AG04450 (cell line): ENCODE measurements at regions of chr1 and their contacts with region 1.

Region 1: DNA sequence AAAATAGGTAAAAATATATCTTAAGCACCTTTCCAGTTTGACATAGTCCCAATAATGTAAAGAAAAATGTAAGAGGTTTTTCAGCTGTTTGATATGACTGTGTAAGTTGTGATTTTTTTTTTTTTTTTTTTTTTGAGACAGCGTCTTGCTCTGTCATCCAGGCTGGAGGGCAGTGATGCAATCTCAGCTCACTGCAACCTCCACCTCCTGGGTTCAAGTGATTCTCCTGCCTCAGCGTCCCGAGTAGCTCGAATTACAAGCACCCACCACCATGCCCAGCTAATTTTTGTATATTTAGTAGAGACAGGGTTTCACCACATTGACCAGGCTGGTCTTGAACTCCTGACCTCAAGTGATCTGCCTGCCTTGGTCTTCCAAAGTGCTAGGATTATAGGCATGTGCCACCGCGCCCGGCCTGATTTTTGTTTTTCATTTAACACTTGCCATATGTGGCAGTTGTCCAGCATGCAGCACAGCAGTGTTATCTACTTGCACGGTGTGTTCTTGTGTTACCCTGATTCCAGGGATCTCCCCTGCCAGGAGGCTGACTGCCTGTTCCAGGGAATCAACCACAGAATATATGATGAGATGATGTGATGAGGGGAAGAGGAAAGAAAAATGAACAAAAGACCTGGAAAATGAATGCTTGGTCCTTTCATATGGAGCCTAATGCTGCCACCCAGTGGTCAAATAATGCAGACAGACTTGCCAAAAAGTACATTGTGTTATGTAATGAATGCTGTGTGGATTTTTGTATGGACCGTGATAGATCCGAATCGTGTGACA is 79.0 kb downstream of the RAVER2 start:
- DNase-seq: peak; percentile 55
- H3K4me3 ChIP-seq: no peak overlapping the region
- H3K27ac ChIP-seq: no peak overlapping the region
- H3K27me3 ChIP-seq: no peaks in the 10 kb centered on the region
- CTCF ChIP-seq: peak; percentile 79

Region 2: GRCh38 chr1:64268653-64269557 is 555.0 kb before region 1 on chr1:
- CTCF ChIA-PET with region 1: interaction called, 80 read pairs
- POLR2A ChIA-PET with region 1: no interaction called
- DNase-seq: peak; percentile 65
- H3K4me3 ChIP-seq: no peak overlapping the region
- H3K27ac ChIP-seq: no peak overlapping the region
- H3K27me3 ChIP-seq: peaks cover 6% of the 10 kb centered on the region
- CTCF ChIP-seq: peak; percentile 80

Region 3: DNA sequence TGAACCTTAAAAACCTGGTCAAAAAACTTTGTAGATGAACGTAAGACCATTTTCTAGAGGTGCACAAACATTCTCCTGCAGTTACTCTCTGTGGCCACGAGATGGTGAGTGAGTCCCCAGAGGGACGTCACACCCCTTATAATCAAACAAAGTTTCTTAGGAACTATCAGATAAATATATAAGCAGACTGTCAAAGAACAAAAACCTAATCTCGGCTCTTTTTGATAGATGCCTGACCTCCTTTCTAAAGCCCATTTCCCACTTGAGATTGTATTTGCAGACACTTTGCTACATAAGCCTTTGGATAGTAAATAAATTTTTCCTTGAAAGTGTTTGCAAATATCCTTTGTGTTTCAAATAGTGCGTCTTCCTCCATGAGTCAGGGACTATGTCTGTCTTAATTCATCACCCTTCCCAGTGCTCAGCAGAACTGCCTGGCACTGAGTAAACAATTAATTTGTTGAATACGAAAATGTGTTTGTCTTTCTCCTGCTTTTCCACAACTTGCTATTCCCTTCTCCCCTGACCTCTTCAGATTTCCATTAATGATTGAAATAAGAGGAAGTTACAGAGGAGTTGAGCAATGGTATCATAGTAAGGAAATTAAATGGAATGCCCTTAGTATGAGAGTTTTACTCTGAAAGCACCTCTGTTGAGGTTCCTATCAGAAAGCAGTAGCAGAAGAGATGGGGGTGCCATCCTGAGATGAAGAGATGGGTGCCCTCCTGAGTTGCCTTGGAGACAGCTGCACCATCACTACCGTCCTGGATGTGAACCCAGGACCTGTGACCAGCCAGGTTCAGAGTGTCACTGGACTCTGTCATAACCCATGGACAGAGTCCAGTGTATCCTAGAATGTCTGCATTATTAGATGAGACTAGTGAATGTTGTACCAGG is 136.8 kb before region 1 on chr1:
- CTCF ChIA-PET with region 1: interaction called, 16 read pairs
- POLR2A ChIA-PET with region 1: no interaction called
- DNase-seq: peak; percentile 16
- H3K4me3 ChIP-seq: no peak overlapping the region
- H3K27ac ChIP-seq: no peak overlapping the region
- H3K27me3 ChIP-seq: no peaks in the 10 kb centered on the region
- CTCF ChIP-seq: peak; percentile 94

Region 4: DNA sequence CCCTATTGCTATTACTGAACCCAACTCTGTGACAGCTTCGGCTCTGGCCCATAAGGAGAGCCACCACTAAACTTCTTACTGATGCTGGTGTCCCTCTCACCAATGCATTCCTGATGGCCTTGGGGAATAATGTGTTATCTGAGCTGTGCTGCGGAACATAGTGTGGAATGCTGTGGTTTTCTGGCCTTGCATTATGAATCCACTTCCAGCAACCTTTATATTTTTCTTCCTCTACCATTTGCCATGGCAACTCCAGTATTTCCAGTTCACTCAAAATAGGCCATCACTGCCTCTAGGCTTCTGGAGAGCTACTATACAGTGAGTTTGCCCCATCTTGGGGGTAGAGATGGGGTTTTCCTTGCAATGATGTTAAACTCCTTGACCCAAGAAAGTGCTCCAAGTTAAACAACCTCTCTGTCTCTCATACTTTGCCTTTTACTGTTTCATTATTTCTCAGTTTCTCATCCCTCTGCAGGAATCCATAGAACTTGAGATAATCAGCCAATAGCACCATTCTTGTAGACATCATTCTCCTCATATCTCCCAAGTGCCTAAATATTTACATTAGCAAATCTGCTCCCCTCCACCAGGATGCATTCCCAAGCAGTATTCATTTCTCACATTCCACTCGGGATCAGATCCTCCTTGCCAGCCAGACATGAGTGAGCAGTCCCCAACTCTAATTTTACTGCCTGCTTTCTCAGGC is 90.2 kb before region 1 on chr1:
- CTCF ChIA-PET with region 1: interaction called, 11 read pairs
- POLR2A ChIA-PET with region 1: no interaction called
- DNase-seq: peak; percentile 8
- H3K4me3 ChIP-seq: no peak overlapping the region
- H3K27ac ChIP-seq: peak overlapping the region; percentile 11
- H3K27me3 ChIP-seq: peaks cover 15% of the 10 kb centered on the region
- CTCF ChIP-seq: no peak

Region 5: GRCh38 chr1:64801851-64802523 is 21.9 kb before region 1 on chr1:
- CTCF ChIA-PET with region 1: interaction called, 34 read pairs
- POLR2A ChIA-PET with region 1: no interaction called
- DNase-seq: no peak
- H3K4me3 ChIP-seq: no peak overlapping the region
- H3K27ac ChIP-seq: no peak overlapping the region
- H3K27me3 ChIP-seq: no peaks in the 10 kb centered on the region
- CTCF ChIP-seq: no peak

Region 6: GRCh38 chr1:64882574-64883255 is 58.8 kb after region 1 on chr1:
- CTCF ChIA-PET with region 1: no interaction called
- POLR2A ChIA-PET with region 1: no interaction called
- DNase-seq: no peak
- H3K4me3 ChIP-seq: no peak overlapping the region
- H3K27ac ChIP-seq: no peak overlapping the region
- H3K27me3 ChIP-seq: no peaks in the 10 kb centered on the region
- CTCF ChIP-seq: no peak

Region 7: DNA sequence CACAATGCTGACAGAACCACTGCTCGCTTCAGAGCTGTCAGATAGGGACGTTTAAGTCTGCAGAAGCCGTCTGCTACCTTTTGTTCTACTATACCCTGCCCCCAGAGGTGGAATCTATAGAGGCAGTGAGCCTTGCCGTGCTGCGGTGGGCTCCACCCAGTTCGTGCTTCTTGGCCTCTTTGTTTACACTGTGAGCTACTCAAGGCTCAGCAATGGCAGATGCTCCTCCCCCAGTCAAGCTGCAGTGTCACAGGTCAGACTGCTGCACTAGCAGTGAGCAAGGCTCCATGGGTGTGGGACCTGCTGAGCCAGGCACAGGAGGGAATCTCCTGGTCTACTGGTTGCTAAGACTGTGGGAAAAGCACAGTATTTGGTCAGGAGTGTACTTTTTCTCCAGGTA is 643.7 kb after region 1 on chr1:
- CTCF ChIA-PET with region 1: interaction called, 11 read pairs
- POLR2A ChIA-PET with region 1: no interaction called
- DNase-seq: no peak
- H3K4me3 ChIP-seq: no peak overlapping the region
- H3K27ac ChIP-seq: no peak overlapping the region
- H3K27me3 ChIP-seq: no peaks in the 10 kb centered on the region
- CTCF ChIP-seq: no peak